GM10248 (cell line): ENCODE measurements at regions of chr5 and their contacts with region 1.

Region 1: DNA sequence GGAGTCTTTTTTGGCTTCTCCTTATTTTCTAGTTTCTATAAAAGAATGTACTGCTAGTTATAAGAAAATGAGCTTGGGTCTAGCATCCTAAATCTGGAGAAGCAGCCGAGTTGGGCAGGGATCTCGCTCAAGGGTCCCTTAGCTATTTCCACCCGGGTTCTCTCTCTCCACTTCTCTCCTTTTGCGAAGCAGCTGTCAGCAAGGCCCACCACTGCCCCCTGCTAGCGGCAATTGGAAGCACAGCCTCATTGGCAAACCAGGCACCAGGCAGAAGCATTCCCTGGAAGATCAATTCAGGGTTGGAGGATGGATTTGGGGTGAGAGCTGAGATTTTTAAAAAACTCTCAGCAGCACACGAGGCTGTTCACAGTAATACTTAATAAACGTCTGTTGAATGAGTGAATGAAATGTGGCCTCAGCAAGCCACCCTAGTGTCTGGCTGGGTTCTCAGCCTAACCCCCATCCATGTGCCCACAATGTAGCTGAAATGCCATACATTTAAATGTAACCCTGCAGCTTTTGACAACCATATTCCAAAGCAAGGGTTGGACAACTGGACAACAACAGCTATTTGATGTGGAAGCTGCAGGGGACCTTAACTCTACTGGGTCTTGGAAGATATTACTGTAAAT is 34.6 kb upstream of the TNIP1 start:
- DNase-seq: peak; percentile 69
- CTCF ChIP-seq: peak; percentile 93

Region 2: DNA sequence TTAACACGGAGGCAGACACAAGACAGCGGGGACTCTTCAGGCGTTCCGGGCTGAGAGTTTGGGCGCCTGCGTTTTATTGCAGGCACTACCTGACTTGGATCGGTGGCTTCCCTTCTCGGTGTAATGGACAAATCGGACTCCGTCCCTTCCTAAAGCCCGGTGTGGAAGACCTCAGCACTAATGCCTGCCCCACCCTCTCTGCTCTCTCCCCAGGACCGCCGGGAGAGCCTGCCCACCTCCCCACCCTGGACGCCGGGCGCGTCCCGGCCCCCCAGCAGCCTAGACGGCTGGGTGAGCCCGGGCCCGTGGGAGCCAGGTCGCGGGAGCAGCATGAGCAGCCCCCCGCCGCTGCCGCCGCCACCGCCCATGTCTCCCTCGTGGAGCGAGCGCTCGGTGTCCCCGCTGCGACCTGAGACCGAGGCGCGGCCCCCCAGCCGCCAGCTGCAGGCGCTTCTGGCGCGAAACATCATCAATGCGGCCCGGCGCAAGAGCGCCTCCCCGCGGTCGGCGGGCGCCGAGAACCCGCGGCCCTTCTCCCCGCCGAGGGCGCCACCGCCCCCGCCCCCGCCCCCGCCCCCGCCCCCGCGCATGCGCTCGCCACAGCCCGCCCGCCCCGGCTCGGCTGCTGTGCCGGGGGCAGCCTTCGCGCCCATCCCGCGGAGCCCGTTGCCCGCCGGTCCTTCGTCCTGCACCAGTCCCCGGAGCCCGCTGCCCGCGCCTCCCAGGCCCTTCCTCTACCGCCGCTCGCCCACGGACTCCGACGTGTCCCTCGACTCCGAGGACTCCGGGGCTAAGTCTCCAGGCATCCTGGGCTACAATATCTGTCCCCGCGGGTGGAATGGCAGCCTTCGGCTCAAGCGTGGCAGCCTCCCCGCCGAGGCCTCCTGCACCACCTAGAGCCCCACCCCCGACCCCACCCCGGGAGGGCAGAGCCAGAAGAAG is 458.9 kb before region 1 on chr5:
- CTCF ChIA-PET with region 1: no interaction called
- POLR2A ChIA-PET with region 1: no interaction called
- DNase-seq: peak; percentile 92
- CTCF ChIP-seq: peak; percentile 86

Region 3: DNA sequence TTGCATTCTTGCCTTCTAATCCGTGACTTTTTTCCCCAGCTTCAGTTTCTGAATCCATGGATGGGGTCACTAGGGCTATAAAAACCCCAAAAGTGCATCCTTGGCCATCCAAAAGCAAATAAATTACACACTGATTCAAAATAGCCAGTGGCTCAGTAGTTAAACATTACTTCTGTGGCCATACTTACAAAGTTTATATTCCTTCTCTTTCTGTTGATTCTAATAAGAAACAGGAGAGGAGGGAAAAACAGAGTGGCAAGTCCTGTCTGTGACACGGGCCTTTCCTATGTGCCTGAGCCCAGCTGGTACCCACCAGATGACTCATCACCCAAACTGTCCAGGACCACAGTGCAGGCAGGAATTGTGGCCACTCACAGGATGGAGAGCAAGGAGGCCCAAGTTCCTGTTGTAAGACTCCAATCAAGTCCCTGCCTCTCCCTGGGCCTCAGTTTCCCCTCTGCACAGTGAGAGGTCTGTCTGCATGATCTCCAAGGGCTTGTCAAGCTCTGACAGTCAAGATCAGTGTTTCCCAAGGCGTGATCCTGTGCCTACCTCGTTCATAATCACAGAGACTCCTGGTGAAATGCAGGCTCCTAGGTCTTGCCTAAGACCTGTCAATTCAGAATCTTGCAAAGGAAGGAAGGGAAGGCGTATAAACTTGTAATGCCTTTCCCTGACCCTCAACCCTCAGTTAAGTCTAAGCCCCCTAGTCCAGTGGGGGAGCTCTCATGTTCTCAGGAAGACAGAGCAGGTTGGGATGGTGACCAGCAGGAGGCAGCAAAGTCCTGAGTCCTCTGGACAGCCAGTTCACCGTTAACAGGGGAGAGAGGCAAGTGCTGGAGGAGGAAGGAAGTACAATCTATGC is 64.1 kb before region 1 on chr5:
- CTCF ChIA-PET with region 1: interaction called, 325 read pairs
- POLR2A ChIA-PET with region 1: interaction called, 3 read pairs
- DNase-seq: peak; percentile 79
- CTCF ChIP-seq: peak; percentile 76

Region 4: GRCh38 chr5:151075698-151076331 is 39.6 kb before region 1 on chr5:
- CTCF ChIA-PET with region 1: interaction called, 45 read pairs
- POLR2A ChIA-PET with region 1: interaction called, 3 read pairs
- DNase-seq: no peak
- CTCF ChIP-seq: no peak

Region 5: GRCh38 chr5:151093476-151093889 is 21.9 kb before region 1 on chr5:
- CTCF ChIA-PET with region 1: interaction called, 92 read pairs
- POLR2A ChIA-PET with region 1: no interaction called
- DNase-seq: no peak
- CTCF ChIP-seq: no peak

Region 6: DNA sequence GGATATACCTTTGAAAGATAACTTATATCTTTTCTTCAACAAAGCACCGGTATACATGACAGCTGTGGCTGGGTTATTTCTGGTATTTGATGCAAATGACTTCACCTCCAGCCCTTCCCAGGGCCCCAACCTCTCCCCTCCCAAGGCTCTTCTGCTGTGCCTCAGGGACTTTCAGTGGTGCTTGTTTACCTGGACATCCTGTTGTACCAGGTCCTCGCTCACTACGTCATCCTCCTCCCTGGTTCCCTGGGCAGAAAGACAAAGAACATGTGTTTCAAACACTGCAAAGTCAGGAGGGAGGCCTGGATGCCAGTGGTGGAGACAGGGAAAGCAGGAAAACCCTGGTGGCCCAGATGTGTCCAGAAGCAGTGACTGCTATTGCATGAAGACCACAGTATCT is 18.8 kb after region 1 on chr5:
- CTCF ChIA-PET with region 1: interaction called, 145 read pairs
- POLR2A ChIA-PET with region 1: no interaction called
- DNase-seq: no peak
- CTCF ChIP-seq: no peak

Region 7: GRCh38 chr5:151164686-151165392 is 49.4 kb after region 1 on chr5:
- CTCF ChIA-PET with region 1: interaction called, 304 read pairs
- POLR2A ChIA-PET with region 1: no interaction called
- DNase-seq: peak; percentile 76
- CTCF ChIP-seq: peak; percentile 93

Region 8: GRCh38 chr5:151240924-151241635 is 125.7 kb after region 1 on chr5:
- CTCF ChIA-PET with region 1: no interaction called
- POLR2A ChIA-PET with region 1: no interaction called
- DNase-seq: no peak
- CTCF ChIP-seq: no peak